Head of caudate nucleus (tissue), 42 donors: ENCODE measurements at regions of chr9 and their contacts with region 1.

Region 1: DNA sequence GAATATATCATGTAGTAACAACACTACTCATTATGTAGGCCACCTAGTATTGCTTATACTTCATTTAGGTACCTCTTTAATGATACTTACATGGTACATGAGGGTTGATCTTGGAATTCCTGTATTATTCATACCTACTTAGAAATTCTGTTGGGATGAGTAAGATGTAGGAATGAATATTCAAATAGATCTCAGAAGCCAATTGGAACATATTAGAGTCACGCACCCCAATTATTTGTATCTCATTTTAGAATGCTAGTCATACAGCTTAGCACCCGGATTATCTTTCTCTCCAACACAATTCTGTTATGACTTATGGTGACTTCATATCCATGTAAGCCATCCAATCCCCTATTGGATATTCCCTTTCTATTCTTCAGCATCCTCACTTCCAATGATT is 106.7 kb upstream of the SH3GL2 start:
- DNase-seq: no peak

Region 2: GRCh38 chr9:17519761-17520160 is 47.6 kb after region 1 on chr9:
- intact Hi-C with region 1: loop called (anchors 5 kb)
- DNase-seq: no peak